PC-9 (cell line): ENCODE measurements at regions of chr7 and their contacts with region 1.

Region 1: DNA sequence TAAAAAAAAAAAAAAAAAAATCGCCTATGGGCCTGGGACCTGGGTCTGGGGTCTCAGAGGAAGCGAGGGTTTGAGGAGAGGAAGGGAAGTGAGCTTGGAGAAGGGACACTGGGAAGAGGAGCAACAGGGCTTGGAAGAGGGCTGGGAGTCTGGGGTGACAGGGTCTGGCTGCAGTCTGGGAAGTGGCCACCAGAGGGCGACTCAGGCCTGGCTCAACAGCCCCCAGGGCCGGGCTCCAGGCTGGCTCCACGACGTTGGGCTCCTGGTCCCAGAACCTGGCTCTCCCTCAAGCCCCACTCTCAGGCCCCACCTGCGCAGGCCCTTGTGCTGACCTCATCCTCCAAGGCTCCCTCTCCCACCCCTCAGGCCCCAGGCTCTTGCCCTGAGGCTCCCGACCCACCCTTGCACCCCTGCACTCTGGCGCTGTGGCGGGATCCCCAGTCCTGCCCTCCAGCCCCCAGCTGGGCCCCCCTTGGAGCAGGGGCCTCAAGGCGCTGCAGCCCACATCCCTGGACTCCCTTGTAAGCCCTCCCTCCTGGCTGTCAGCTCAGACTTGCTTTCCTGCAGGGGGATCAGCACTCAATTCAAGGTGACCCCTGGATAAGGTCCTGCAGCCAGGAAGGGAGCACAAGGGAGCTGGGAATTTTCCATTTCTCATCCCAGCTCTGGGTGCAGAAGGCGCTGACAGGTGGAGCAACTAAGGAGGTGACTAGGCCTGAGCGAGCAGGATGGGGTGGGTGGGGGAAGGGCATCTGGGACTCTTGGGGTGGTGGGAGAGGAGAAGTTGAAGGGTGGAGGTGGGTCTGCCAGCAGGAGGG is 5.4 kb upstream of the SPACDR start:
- DNase-seq: peak; percentile 54 to 85
- H3K4me3 ChIP-seq: no peak overlapping the region
- H3K27ac ChIP-seq: no peak overlapping the region
- H3K4me1 ChIP-seq: no peaks in the 10 kb centered on the region
- H3K27me3 ChIP-seq: no peaks in the 10 kb centered on the region
- CTCF ChIP-seq: peak; percentile 88

Region 2: DNA sequence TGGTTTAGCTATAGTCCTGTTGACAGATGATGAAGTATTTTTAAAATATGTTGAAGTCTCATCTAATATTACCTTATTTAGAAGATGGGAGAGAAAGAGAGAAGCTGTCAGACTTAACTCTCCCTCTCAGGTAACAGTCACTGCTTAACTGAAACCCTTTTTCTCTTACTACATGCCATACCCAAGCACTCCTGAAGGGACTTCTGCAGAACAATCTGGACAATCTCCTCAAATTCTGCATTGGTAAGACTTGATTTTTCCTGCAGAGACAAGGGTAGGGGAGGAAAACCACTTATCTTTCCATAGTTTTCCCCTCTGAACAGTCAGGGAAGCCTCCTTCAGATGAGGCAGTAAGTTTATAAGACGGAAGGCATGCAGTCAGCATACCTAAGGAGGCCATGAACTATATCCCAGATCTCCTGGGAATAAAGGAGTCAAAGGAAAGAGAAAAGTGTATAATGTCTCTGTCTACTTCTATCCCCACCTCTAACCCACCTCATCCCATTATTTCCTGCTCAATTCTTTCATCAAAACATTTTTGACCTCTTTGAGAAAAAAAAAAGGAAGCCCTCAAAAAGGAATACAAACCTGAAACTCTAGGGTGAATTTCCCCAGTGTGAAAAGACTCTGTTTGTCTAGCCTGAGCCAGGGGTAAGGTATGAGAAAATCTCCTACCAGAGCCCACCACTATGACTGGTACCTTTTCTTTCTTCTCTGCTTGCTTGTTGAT is 50.3 kb before region 1 on chr7:
- CTCF ChIA-PET with region 1: no interaction called
- POLR2A ChIA-PET with region 1: no interaction called
- intact Hi-C with region 1: no loop called
- DNase-seq: no peak
- H3K4me3 ChIP-seq: no peak overlapping the region
- H3K27ac ChIP-seq: no peak overlapping the region
- H3K4me1 ChIP-seq: no peaks in the 10 kb centered on the region
- H3K27me3 ChIP-seq: no peaks in the 10 kb centered on the region
- CTCF ChIP-seq: no peak

Region 3: GRCh38 chr7:100456558-100456957 is 12.9 kb before region 1 on chr7:
- CTCF ChIA-PET with region 1: no interaction called
- POLR2A ChIA-PET with region 1: no interaction called
- intact Hi-C with region 1: no loop called
- DNase-seq: no peak
- H3K4me3 ChIP-seq: no peak overlapping the region
- H3K27ac ChIP-seq: no peak overlapping the region
- H3K4me1 ChIP-seq: no peaks in the 10 kb centered on the region
- H3K27me3 ChIP-seq: no peaks in the 10 kb centered on the region
- CTCF ChIP-seq: no peak

Region 4: GRCh38 chr7:100556541-100556940 is 87.1 kb after region 1 on chr7:
- CTCF ChIA-PET with region 1: interaction called, 18 read pairs
- POLR2A ChIA-PET with region 1: no interaction called
- intact Hi-C with region 1: loop called (anchors 1 kb)
- DNase-seq: no peak
- H3K4me3 ChIP-seq: no peak overlapping the region
- H3K27ac ChIP-seq: no peak overlapping the region
- H3K4me1 ChIP-seq: 0 out of 2 replicates have a peak, but pooled peaks cover 8% of the 10 kb centered on the region
- H3K27me3 ChIP-seq: no peaks in the 10 kb centered on the region
- CTCF ChIP-seq: no peak

Region 5: GRCh38 chr7:100655908-100656674 is 186.7 kb after region 1 on chr7 and contains the start of gene ACTL6B:
- CTCF ChIA-PET with region 1: interaction called, 13 read pairs
- POLR2A ChIA-PET with region 1: no interaction called
- intact Hi-C with region 1: no loop called
- DNase-seq: no peak
- H3K4me3 ChIP-seq: no peak within 1 kb of the TSS
- H3K27ac ChIP-seq: no peak within 1 kb of the TSS
- H3K4me1 ChIP-seq: peaks cover 7% of the 10 kb centered on the region
- H3K27me3 ChIP-seq: no peaks in the 10 kb centered on the region
- CTCF ChIP-seq: no peak
- total RNA-seq, gene ACTL6B: not detected in 2 replicates

Region 6: DNA sequence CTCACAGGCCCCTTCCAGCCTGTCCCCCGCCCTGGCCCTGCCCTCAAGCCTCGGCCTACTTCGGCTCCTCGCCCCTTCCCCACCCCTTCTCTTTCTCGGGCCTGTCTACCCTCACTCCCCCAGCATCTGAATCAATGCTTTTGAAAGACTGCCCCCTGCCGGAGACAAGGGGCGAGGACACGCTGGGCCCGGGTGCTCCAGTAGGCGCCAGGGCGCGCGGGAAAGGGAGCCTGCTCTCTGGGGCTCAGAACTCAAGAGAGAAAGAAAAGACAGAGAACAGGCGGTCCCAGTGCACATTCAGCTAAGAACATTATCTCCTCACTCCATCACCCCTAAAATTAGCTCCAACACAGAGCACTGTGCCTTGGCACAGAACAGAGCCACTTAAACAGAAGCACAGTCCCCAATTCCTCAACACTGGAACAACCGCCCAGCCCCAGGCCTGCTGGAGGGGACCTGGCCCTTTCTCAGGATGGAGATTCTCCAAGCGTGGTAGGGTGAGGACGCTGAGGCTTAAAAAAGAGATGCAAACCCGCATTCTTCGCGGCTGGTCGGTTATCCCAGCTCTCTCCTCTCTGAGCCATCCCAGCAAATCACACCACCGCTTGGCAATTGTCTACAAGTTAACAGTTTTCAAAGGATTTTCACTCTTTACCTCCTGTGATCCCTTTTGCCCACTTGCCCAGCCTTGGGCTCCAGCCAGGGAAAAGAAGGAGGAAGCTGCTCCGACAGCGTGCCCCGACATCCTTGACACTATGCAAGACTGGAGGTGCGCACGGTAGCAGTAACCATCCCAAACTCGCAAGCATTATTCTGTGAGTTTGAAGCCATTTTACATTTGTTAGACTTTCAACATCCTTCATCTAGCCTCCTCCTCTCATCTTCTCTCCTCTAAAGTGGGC is 222.5 kb after region 1 on chr7:
- CTCF ChIA-PET with region 1: no interaction called
- POLR2A ChIA-PET with region 1: no interaction called
- intact Hi-C with region 1: loop called (anchors 5 kb)
- DNase-seq: peak in 1 of 2 experiments; percentile 72
- H3K4me3 ChIP-seq: peak overlapping the region; percentile 97; the same call in 1 of the 2 replicates
- H3K27ac ChIP-seq: no peak overlapping the region
- H3K4me1 ChIP-seq: peaks cover 13% of the 10 kb centered on the region
- H3K27me3 ChIP-seq: no peaks in the 10 kb centered on the region
- CTCF ChIP-seq: peak; percentile 95

Region 7: DNA sequence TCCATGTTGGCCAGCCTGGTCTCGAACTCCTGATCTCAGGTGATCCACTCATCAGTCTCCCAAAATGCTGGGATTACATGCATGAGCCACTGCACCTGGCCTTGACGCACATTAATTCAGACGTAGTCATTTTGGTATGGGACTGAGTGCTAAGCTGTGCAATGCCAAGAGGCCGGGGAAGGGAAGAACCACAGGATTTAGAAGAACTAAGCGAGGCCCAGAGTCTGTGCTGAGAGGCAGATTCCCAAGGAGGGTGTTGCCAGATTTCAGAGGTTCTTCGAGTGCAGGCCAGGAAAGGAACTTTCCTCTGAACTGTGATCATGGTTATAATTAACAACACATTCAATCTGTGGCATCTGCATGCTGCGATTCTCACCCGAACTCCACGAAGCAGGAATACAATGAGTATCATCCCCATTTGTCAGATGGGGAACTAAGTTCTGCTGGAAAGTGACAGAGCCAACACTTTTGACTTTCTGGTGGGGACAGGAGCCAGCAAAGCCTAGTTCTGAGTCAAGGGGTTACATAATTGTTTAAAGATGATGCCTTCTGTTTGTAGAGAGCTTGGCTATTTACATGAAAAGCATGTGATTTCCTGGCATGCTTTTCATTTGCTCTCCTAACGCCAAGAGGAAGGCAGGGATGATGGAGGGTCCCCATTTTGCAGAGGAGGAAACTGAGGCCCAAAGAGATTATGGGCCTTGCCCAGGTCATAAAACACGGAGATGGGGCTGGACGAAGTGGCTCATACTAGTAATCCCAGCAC is 257.7 kb after region 1 on chr7:
- CTCF ChIA-PET with region 1: no interaction called
- POLR2A ChIA-PET with region 1: interaction called, 15 read pairs
- intact Hi-C with region 1: no loop called
- DNase-seq: no peak
- H3K4me3 ChIP-seq: no peak overlapping the region
- H3K27ac ChIP-seq: no peak overlapping the region
- H3K4me1 ChIP-seq: peaks cover 19% of the 10 kb centered on the region
- H3K27me3 ChIP-seq: no peaks in the 10 kb centered on the region
- CTCF ChIP-seq: no peak

Region 8: DNA sequence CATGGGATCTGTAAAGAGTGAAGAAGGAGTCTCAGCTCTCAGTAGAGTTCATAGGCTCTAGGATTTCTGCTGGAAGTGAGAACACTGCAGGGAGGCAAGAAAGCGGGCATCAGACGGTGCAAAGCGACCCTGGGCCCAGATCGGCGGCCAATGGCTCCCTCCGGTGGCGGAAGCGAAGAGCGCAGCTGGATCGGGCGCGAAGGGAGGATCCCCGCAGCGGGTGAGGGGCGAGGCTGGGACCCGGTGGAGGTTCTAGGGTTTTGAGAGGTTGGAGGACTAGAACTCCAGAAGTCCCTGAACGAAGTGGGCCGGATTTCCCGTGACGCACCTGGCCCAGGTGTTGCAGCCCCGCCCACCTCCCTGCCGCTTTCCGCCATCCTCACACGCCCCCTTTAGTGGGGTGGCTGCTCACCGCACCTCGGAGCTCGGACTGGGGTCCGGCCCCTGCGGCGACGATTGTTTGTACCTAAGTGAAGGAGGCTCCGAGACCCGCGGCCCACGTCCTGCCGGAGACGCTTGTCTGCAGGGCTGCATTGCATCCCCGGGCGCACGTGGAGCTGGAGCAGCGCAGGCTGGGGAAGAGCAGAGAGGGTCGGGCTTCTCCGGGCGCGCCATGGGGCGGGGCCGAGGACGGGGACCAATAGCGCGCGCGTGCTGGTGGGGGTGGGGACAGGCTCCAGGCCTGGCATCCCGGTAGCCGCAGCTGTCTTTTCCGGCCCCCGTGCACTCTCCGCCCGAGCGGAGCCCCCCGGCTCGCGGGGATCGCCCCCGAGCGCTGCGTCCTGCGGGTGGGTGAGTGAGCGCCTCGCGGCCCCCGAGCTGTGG is 382.8 kb after region 1 on chr7 and contains the start of gene SLC12A9:
- CTCF ChIA-PET with region 1: no interaction called
- POLR2A ChIA-PET with region 1: no interaction called
- intact Hi-C with region 1: loop called (anchors 1 kb)
- DNase-seq: peak; percentile 76 to 93
- H3K4me3 ChIP-seq: peak within 1 kb of the TSS; percentile 97
- H3K27ac ChIP-seq: no peak within 1 kb of the TSS
- H3K4me1 ChIP-seq: peaks cover 9% of the 10 kb centered on the region
- H3K27me3 ChIP-seq: no peaks in the 10 kb centered on the region
- CTCF ChIP-seq: peak; percentile 95
- total RNA-seq, gene SLC12A9: 34.7 and 36.7 TPM in 2 replicates

Region 9: GRCh38 chr7:101265622-101266516 is 796.4 kb after region 1 on chr7:
- CTCF ChIA-PET with region 1: interaction called, 10 read pairs
- POLR2A ChIA-PET with region 1: no interaction called
- intact Hi-C with region 1: no loop called
- DNase-seq: no peak
- H3K4me3 ChIP-seq: no peak overlapping the region
- H3K27ac ChIP-seq: no peak overlapping the region
- H3K4me1 ChIP-seq: no peaks in the 10 kb centered on the region
- H3K27me3 ChIP-seq: 0 out of 2 replicates have a peak, but pooled peaks cover 3% of the 10 kb centered on the region
- CTCF ChIP-seq: no peak